HCT116 (cell line): ENCODE measurements at regions of chr10 and their contacts with region 1.

Region 1: DNA sequence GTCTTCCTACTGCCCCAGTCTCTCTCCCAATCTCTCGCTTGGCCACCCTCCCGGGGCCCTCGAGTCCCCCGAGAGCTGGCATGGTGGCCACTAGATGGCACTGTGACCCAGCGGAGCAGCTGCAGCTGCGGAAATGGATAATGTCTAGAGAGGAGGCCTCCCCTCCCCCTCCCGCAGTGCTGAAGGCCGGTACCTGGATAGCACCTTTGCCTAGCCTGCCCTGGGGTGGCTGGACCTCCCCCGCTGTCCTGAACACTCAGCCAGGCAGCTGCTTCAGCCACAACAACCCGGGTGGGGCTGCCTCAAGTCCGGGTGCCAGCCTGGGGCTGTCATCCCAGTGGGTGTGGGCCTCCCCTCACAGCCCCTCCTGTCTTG is 65.2 kb downstream of the GOLGA7B start:
- DNase-seq: peak; percentile 58
- ATAC-seq: peak; percentile 98
- H3K4me3 ChIP-seq: no peak overlapping the region
- H3K27ac ChIP-seq: no peak overlapping the region; the same call in 1 of the 2 replicates
- H3K4me1 ChIP-seq: peaks cover 3 to 9% of the 10 kb centered on the region in 2 experiments; a peak in 3 of 4 replicates
- H3K27me3 ChIP-seq: peaks cover 5% of the 10 kb centered on the region; the same call in 1 of the 2 replicates
- CTCF ChIP-seq: peak; percentile 92 to 97 (median 96)
- POLR2A ChIP-seq: no peak
- RAD21 ChIP-seq: peak; percentile 99

Region 2: DNA sequence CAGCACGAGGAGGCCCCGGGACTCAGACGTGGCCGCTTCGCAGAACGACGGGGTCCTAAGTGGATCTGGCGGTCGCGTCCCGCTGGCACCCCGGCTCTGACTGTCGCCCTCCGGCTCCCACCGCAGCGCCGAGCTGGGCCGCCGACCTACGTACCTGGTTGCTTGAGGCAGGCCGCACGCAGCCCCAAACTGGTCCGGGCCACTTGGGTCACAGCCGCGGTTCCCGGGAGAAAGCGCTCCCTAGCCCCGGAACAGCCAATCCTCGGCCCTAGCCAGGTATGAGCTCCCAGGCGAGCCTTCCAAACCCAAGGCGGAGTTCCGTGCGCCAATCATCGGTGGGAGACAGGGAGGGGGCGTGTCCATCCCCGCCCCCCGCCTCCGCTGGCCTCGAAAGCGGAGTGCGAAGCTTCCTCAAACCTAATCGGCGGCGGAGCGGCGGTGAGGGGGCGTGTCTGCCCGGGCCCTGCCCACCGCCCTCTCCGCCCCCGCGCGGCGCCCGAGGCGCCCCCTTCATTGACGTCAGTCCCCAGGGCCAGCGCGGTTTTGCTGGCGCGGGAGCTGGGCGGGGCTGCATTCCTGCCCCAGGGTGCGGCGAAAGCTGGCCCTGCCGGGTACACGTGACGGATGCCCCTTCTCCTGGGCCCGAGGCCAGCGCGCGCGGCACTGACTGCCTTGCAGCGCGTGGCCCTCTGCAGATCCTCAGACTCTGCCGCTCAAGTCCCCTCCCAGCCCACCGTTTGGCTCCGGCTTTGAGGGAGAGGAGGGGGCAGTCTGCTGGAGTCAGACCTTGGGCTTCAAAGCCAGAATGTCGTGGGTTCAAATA is 227.7 kb before region 1 on chr10 and contains the start of gene AVPI1:
- CTCF ChIA-PET with region 1: no interaction called
- POLR2A ChIA-PET with region 1: no interaction called
- RAD21 ChIA-PET with region 1: no interaction called
- intact Hi-C with region 1: no loop called
- DNase-seq: peak; percentile 96
- ATAC-seq: peak; percentile 87
- H3K4me3 ChIP-seq: peak within 1 kb of the TSS; percentile 73 to 90
- H3K27ac ChIP-seq: peak within 1 kb of the TSS; percentile 74
- H3K4me1 ChIP-seq: peaks cover 47 to 67% of the 10 kb centered on the region in 2 experiments
- H3K27me3 ChIP-seq: no peaks in the 10 kb centered on the region
- CTCF ChIP-seq: no peak
- POLR2A ChIP-seq: peak; percentile 56
- RAD21 ChIP-seq: no peak
- total RNA-seq, gene AVPI1: 26.7 TPM

Region 3: DNA sequence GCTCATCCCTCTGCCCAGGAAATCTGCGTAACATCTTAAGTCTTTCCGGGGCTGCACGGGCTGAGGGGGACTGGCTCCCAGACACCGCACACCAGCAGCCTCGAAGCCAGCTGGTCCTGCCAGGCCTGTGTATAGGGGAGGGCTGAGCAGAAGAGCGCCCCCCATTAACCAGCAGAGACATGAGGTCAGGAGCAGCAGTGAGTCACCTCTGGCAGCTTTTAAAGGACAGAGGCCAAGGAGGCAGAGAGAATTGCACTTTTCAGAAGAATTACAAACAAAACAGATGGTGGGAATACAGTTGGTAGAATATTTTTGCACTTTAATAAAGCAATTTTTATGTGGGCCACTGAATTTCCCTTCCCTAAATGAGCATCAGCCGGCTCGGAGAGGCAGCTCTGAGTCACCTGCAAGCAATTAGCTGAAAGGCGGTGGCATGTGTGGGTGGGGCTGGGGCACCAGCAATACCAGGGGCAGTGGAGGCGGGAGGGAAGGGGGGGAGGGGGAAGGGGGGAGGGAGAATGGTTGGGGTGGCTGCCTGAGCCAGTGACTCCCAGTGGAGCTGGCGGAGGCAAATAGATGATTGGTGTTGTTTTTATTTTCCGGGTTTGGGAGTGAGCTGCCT is 26.1 kb before region 1 on chr10:
- CTCF ChIA-PET with region 1: no interaction called
- POLR2A ChIA-PET with region 1: no interaction called
- RAD21 ChIA-PET with region 1: no interaction called
- intact Hi-C with region 1: no loop called
- DNase-seq: peak; percentile 58
- ATAC-seq: peak; percentile 79
- H3K4me3 ChIP-seq: peak overlapping the region; percentile 25 to 41
- H3K27ac ChIP-seq: peak overlapping the region; percentile 67
- H3K4me1 ChIP-seq: peaks cover 27 to 44% of the 10 kb centered on the region in 2 experiments
- H3K27me3 ChIP-seq: no peaks in the 10 kb centered on the region
- CTCF ChIP-seq: peak in 2 of 3 experiments; percentile 15 to 32; a peak in 3 of 6 replicates
- POLR2A ChIP-seq: no peak
- RAD21 ChIP-seq: no peak

Region 4: DNA sequence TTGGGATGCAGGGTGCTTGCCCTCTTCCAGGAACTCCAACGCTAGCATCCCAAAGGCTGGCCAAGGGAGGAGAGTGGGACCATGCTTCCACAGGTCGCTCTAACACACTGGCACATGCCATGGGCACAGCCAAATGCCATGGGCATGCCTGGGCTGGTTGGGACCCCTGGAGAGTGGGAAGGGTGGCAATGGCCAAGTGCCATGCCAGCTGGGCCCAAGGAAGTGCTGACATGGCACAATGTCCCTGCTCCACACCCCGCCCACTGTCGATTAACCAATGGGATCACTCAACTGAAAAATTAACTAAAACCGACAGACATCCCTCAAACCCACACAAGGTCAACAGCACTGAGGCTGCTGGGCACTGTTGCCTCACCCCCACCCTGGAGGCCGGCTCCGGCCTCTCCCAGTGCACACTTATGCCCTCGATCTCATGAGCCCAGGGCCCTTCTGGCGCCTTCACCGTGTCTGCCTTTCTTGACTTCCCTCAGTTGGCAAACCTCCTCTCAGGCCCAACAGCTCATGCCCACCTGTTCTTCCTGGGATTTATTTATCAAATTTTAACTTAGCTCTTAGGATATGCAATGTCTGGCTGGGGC is 18.2 kb after region 1 on chr10:
- CTCF ChIA-PET with region 1: no interaction called
- POLR2A ChIA-PET with region 1: no interaction called
- RAD21 ChIA-PET with region 1: no interaction called
- intact Hi-C with region 1: no loop called
- DNase-seq: no peak
- ATAC-seq: no peak; the same call in 1 of the 2 replicates
- H3K4me3 ChIP-seq: no peak overlapping the region
- H3K27ac ChIP-seq: no peak overlapping the region
- H3K4me1 ChIP-seq: no peaks in the 10 kb centered on the region
- H3K27me3 ChIP-seq: no peaks in the 10 kb centered on the region; the same call in 1 of the 2 replicates
- CTCF ChIP-seq: no peak
- POLR2A ChIP-seq: no peak
- RAD21 ChIP-seq: no peak

Region 5: DNA sequence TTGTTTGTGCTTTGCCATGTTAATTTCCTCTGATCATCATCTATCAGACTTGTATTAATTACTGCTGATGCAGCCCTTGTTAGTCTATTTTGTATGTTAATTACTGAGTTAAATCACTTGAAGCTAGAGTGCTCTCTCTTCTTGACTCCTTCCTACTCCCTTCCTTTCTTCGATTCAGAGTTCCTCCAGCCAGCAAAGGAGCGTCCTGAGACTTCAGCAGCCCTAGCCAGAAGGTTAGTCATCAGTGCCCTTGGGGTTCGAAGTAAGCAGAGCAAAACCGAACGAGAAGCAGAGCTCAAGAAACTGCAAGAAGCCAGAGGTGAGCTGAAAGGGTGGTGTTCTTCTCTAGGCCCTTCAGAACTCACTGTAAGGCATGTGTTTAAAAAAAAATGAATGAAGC is 321.0 kb after region 1 on chr10:
- CTCF ChIA-PET with region 1: no interaction called
- POLR2A ChIA-PET with region 1: no interaction called
- RAD21 ChIA-PET with region 1: no interaction called
- intact Hi-C with region 1: loop called (anchors 10 kb)
- DNase-seq: no peak
- ATAC-seq: no peak
- H3K4me3 ChIP-seq: no peak overlapping the region
- H3K27ac ChIP-seq: no peak overlapping the region
- H3K4me1 ChIP-seq: no peaks in the 10 kb centered on the region
- H3K27me3 ChIP-seq: no peaks in the 10 kb centered on the region
- CTCF ChIP-seq: no peak
- POLR2A ChIP-seq: no peak
- RAD21 ChIP-seq: no peak

Region 6: GRCh38 chr10:98664331-98665042 is 749.7 kb after region 1 on chr10:
- CTCF ChIA-PET with region 1: no interaction called
- POLR2A ChIA-PET with region 1: no interaction called
- RAD21 ChIA-PET with region 1: no interaction called
- intact Hi-C with region 1: loop called (anchors 10 kb)
- DNase-seq: peak; percentile 47
- ATAC-seq: peak; percentile 98
- H3K4me3 ChIP-seq: no peak overlapping the region
- H3K27ac ChIP-seq: no peak overlapping the region
- H3K4me1 ChIP-seq: no peaks in the 10 kb centered on the region
- H3K27me3 ChIP-seq: peaks cover 26% of the 10 kb centered on the region
- CTCF ChIP-seq: peak; percentile 83 to 94 (median 86)
- POLR2A ChIP-seq: no peak
- RAD21 ChIP-seq: peak; percentile 85